Heart left ventricle (tissue), 16 donors: ENCODE measurements at regions of chr10 and their contacts with region 1.

Region 1: DNA sequence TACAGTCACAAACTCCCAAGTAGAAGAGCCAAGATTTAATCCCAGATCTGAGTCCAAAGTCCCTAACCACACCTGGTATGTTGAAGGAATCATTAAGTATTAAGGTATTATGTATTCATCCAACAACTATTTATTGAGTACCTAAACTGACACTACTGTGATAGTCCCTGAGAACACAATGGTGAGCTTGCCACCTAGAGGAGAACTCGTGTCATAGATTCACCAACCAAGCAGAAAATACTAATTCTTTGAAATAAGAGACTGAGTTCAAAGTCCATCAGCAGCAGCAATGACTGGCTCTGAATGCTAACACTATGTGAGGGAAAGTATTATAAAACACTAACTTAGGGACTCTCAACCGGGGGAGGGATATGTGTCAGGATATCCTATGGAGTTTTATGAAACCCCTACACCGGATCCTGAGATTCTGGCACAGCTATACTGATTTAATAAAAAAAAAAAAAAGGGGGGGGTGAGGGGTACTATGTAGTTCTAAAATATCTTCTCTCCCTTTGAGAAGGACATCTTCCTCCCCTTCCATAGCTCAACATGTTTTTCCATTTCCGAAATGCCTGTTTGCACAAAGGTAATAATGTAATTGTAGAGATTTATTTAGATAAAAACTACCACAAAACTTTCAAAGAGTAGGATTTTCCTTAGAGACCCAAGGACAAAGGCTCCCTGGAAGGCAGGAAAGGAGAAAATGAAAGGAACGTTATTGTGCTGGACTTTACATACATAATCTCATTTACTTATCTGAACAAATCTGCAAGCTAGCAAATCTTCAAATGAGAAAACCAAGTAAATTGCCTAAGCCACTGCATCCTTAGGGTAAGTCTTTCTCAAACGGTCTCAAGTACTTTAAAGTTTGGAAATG is 1.6 kb downstream of the NCOA4 start:
- DNase-seq: no peak
- ATAC-seq: peak in 1 of 4 donors; percentile 10
- H3K4me3 ChIP-seq: peak overlapping the region in 11 of 12 donors; percentile 61 to 92 (median 82)
- H3K27ac ChIP-seq: peak overlapping the region in 9 of 12 donors; percentile 85 to 97 (median 94)
- H3K4me1 ChIP-seq: peaks cover 10 to 66% (median 58%) of the 10 kb centered on the region in 12 donors
- H3K27me3 ChIP-seq: no peaks in the 10 kb centered on the region
- CTCF ChIP-seq: peak; percentile 23 to 69 (median 62)
- POLR2A ChIP-seq: no peak

Region 2: GRCh38 chr10:45515630-45516029 is 513.2 kb before region 1 on chr10:
- intact Hi-C with region 1: no loop called
- DNase-seq: no peak
- ATAC-seq: no peak
- H3K4me3 ChIP-seq: no peak overlapping the region
- H3K27ac ChIP-seq: no peak overlapping the region
- H3K4me1 ChIP-seq: peaks cover 0 to 17% (median 0%) of the 10 kb centered on the region in 12 donors
- H3K27me3 ChIP-seq: no peaks in the 10 kb centered on the region
- CTCF ChIP-seq: no peak
- POLR2A ChIP-seq: no peak

Region 3: GRCh38 chr10:45997994-45998763 is 30.6 kb before region 1 on chr10:
- intact Hi-C with region 1: loop called in 1 of 10 experiments (anchors 5 kb)
- DNase-seq: no peak
- ATAC-seq: no peak
- H3K4me3 ChIP-seq: no peak overlapping the region
- H3K27ac ChIP-seq: no peak overlapping the region
- H3K4me1 ChIP-seq: no peaks in the 10 kb centered on the region
- H3K27me3 ChIP-seq: no peaks in the 10 kb centered on the region
- CTCF ChIP-seq: no peak
- POLR2A ChIP-seq: no peak

Region 4: GRCh38 chr10:46268076-46268881 is 239.5 kb after region 1 on chr10:
- intact Hi-C with region 1: no loop called
- DNase-seq: peak in 1 of 5 donors; percentile 12
- ATAC-seq: no peak
- H3K4me3 ChIP-seq: peak overlapping the region in 2 of 12 donors; percentile 15 to 49
- H3K27ac ChIP-seq: peak overlapping the region in 1 of 12 donors; percentile 64
- H3K4me1 ChIP-seq: no peaks in the 10 kb centered on the region
- H3K27me3 ChIP-seq: no peaks in the 10 kb centered on the region
- CTCF ChIP-seq: no peak
- POLR2A ChIP-seq: no peak